Sigmoid colon (tissue), 7 donors: ENCODE measurements at regions of chr17 and their contacts with region 1.

Region 1: DNA sequence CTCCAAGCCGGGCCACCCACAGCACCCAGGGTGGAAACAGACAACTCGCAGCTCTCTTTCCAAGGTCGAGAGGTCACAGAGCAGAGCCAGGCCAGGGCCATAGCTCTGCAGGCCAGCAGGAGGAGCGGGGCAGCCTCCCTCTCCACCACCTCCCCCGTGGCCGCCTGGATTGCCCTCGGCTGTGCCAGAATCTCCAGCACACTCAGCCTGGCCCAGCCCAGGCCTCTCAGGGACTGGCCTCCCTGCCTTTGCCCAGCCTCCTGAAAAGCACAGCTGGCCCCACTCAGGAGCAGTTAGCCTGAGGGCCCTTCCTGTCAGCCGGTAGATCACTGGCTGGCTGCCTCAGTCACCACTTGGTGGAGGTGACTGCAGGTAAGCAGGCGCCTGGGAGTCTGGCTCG is 85.8 kb upstream of the SEC14L1 start:
- DNase-seq: no peak
- H3K4me3 ChIP-seq: no peak overlapping the region
- H3K27ac ChIP-seq: no peak overlapping the region
- H3K4me1 ChIP-seq: no peaks in the 10 kb centered on the region
- H3K27me3 ChIP-seq: peaks cover 3 to 67% (median 34%) of the 10 kb centered on the region in 3 donors
- CTCF ChIP-seq: no peak
- EP300 ChIP-seq: no peak
- POLR2A ChIP-seq: no peak

Region 2: DNA sequence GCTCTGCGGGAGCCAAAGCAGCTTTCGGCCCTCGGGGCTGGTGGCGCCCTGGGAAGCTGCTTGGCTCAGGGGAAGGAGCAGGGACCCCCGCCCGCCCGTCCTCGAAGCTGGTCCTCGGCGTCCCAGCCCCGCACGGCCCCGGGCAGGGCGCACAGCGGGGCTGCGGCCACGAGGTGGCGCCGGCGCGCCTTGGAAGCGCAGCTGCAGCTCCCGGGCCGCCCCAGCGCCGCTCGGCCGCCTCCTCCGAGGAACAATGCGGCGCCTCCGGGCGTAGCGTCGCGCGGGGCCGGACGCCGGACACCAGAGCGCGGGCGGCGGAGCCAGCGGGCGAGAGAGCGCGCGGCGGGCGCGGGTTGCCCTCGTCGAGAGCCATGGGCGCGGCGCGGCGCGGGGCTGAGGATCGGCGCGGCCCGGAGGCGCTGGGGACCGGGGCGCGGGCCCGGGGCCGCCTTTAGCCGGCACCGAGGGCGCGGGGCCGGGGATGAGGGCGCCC is 186.7 kb before region 1 on chr17 and contains the start of gene MGAT5B:
- intact Hi-C with region 1: loop called (anchors 1 kb)
- DNase-seq: peak; percentile 83
- H3K4me3 ChIP-seq: peak within 1 kb of the TSS in 3 of 4 donors; percentile 34 to 44 (median 43)
- H3K27ac ChIP-seq: no peak within 1 kb of the TSS
- H3K4me1 ChIP-seq: peaks cover 0 to 26% (median 22%) of the 10 kb centered on the region in 4 donors
- H3K27me3 ChIP-seq: peaks cover 25 to 79% (median 54%) of the 10 kb centered on the region in 3 donors
- CTCF ChIP-seq: peak; percentile 14 to 85 (median 28)
- EP300 ChIP-seq: no peak
- POLR2A ChIP-seq: no peak
- total RNA-seq, gene MGAT5B: 0.16 to 0.83 (median 0.49) TPM

Region 3: GRCh38 chr17:76986365-76986764 is 68.6 kb before region 1 on chr17:
- intact Hi-C with region 1: no loop called
- DNase-seq: peak; percentile 69
- H3K4me3 ChIP-seq: no peak overlapping the region
- H3K27ac ChIP-seq: no peak overlapping the region
- H3K4me1 ChIP-seq: no peaks in the 10 kb centered on the region
- H3K27me3 ChIP-seq: peaks cover 0 to 19% (median 0%) of the 10 kb centered on the region in 3 donors
- CTCF ChIP-seq: no peak
- EP300 ChIP-seq: no peak
- POLR2A ChIP-seq: no peak